Endothelial cell of umbilical vein (primary cell): ENCODE measurements at regions of chr4 and their contacts with region 1.

Region 1: DNA sequence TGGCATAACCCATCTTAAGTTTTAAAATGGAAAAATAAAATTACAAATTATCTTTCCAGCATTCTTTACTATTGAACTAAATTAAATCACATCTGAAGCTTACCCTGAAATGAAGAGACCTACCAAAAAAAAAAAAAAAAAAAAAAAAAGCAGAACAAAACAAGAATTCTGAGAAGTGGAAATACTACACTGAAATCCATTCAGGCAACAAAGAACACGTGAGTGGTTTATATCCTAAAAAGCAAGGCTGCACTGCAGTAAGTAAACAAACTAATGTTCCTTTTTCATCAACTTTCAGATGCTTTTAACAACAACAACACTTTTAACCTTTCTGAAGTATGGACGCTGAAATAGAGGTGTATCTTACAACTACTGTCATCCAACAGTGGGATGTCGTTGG is 7.5 kb downstream of the FRYL start:
- DNase-seq: no peak
- H3K4me3 ChIP-seq: no peak overlapping the region
- H3K27ac ChIP-seq: no peak overlapping the region
- H3K4me1 ChIP-seq: peaks cover 25% of the 10 kb centered on the region
- H3K27me3 ChIP-seq: no peaks in the 10 kb centered on the region
- CTCF ChIP-seq: no peak
- POLR2A ChIP-seq: no peak

Region 2: GRCh38 chr4:48748949-48749596 is 23.5 kb before region 1 on chr4:
- CTCF ChIA-PET with region 1: interaction called, 3 read pairs
- POLR2A ChIA-PET with region 1: no interaction called
- dilution Hi-C with region 1: no loop called
- intact Hi-C with region 1: loop called (anchors 2 kb)
- DNase-seq: no peak
- H3K4me3 ChIP-seq: no peak overlapping the region
- H3K27ac ChIP-seq: no peak overlapping the region
- H3K4me1 ChIP-seq: peaks cover 29% of the 10 kb centered on the region
- H3K27me3 ChIP-seq: no peaks in the 10 kb centered on the region
- CTCF ChIP-seq: no peak
- POLR2A ChIP-seq: no peak